ENCODE measurements at regions of chr6 and their contacts with region 1.

Region 1: GRCh38 chr6:98845211-98846020 is 11.0 kb downstream of the POU3F2 start:
- DNase-seq: peak in 8 of 9 experiments; percentile 43 to 74 (median 66)
- ATAC-seq: peak; percentile 79
- H3K4me3 ChIP-seq: peak overlapping the region in 1 of 2 experiments; percentile 3
- H3K4me3 Mint-ChIP-seq: peak overlapping the region; percentile 72
- H3K27ac ChIP-seq: no peak overlapping the region
- H3K27ac Mint-ChIP-seq: no peak overlapping the region
- H3K4me1 ChIP-seq: peaks cover 24% of the 10 kb centered on the region
- H3K4me1 Mint-ChIP-seq: peaks cover 27% of the 10 kb centered on the region
- H3K27me3 ChIP-seq: peaks cover 65% of the 10 kb centered on the region in 2 experiments
- H3K27me3 Mint-ChIP-seq: peaks cover 72% of the 10 kb centered on the region
- CTCF ChIP-seq: peak; percentile 79

Region 2: DNA sequence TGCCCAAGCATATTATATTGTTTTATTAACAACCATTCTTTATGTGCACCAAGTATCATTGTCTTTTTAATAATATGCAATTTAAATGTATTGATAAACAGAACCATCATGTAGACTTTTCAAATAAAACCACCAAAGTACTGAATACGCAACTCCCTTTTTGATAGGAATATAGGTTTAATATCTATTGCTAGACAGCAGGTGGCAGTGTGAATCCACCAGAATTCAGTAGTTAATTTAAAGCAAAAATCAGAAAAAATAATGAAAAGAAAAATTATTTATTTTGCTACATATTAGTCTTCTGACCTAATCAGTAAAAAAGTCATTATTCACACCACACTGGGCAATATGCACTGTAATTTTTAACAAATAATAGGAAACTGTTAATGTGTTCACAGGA is 1777.2 kb before region 1 on chr6:
- CTCF ChIA-PET with region 1: no interaction called
- POLR2A ChIA-PET with region 1: no interaction called
- intact Hi-C with region 1: loop called (anchors 5 to 10 kb)
- DNase-seq: peak in 2 of 9 experiments; percentile 15 to 24
- ATAC-seq: no peak
- H3K4me3 ChIP-seq: no peak overlapping the region
- H3K4me3 Mint-ChIP-seq: no peak overlapping the region
- H3K27ac ChIP-seq: no peak overlapping the region
- H3K27ac Mint-ChIP-seq: no peak overlapping the region
- H3K4me1 ChIP-seq: no peaks in the 10 kb centered on the region
- H3K4me1 Mint-ChIP-seq: no peaks in the 10 kb centered on the region
- H3K27me3 ChIP-seq: no peaks in the 10 kb centered on the region
- H3K27me3 Mint-ChIP-seq: no peaks in the 10 kb centered on the region
- CTCF ChIP-seq: peak; percentile 34

Region 3: DNA sequence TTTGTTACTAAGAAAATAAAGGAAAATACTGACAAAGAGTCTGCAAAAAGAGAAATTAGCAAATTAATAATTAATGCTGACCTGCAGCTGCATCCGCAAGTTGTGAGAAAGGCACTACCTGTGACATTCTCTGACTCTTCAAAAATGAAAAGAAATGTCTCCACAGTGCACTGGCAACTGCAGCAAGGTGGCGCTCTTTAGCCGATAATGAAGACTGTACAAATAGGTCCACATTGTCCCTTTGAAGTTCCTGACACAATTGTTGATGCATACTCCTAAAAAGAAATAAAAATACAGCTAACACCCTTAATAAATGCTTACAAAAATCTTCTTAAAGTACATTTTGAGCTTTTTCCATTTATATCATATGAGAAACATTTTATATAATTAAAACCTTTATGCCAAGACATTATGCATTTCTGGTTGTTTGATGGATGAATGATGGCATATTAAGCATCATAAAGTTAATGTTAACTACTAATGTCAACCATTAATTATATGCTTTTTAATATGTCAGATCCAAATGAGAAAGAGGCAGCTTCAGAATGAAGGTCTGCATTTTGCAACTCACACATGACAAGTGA is 1658.9 kb before region 1 on chr6:
- CTCF ChIA-PET with region 1: no interaction called
- POLR2A ChIA-PET with region 1: no interaction called
- intact Hi-C with region 1: loop called (anchors 2 to 5 kb)
- DNase-seq: peak; percentile 33 to 72 (median 60)
- ATAC-seq: peak; percentile 65
- H3K4me3 ChIP-seq: no peak overlapping the region
- H3K4me3 Mint-ChIP-seq: no peak overlapping the region
- H3K27ac ChIP-seq: no peak overlapping the region
- H3K27ac Mint-ChIP-seq: no peak overlapping the region
- H3K4me1 ChIP-seq: no peaks in the 10 kb centered on the region
- H3K4me1 Mint-ChIP-seq: no peaks in the 10 kb centered on the region
- H3K27me3 ChIP-seq: no peaks in the 10 kb centered on the region
- H3K27me3 Mint-ChIP-seq: no peaks in the 10 kb centered on the region
- CTCF ChIP-seq: peak; percentile 91

Region 4: DNA sequence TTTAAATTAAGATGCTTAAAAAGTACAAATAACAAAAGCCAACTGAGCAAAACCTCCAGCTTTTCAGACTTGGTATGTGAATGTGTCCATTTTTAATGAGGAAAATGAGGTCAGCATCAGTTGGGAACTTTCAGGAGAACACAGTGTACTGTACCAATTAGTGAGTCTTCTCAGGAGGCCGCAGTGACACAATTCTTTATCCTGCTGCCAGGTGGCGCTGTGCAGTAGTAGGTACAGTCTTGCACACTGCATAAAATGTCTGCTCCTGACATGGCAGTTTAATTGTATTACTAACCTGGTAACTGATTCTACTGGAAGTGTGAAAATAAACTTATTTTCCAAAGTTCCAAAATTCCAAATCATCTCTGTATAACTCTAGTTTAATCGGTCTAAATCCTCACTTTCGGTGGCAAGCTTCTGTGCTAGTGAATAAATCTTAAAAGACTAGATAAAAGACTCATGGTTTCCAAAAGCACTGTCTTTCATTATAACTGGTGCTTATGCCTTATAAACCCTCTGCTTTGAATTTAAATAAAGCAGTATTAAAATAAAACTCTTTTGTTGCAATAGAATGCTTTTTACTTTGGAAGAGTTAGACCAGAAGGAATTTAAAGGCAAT is 1347.6 kb before region 1 on chr6:
- CTCF ChIA-PET with region 1: interaction called, 28 read pairs
- POLR2A ChIA-PET with region 1: no interaction called
- intact Hi-C with region 1: loop called in 1 of 2 experiments (anchors 1 kb)
- DNase-seq: peak; percentile 6 to 69 (median 50)
- ATAC-seq: peak; percentile 75
- H3K4me3 ChIP-seq: no peak overlapping the region
- H3K4me3 Mint-ChIP-seq: no peak overlapping the region
- H3K27ac ChIP-seq: no peak overlapping the region
- H3K27ac Mint-ChIP-seq: no peak overlapping the region
- H3K4me1 ChIP-seq: no peaks in the 10 kb centered on the region
- H3K4me1 Mint-ChIP-seq: no peaks in the 10 kb centered on the region
- H3K27me3 ChIP-seq: no peaks in the 10 kb centered on the region
- H3K27me3 Mint-ChIP-seq: peaks cover 12% of the 10 kb centered on the region
- CTCF ChIP-seq: peak; percentile 84

Region 5: DNA sequence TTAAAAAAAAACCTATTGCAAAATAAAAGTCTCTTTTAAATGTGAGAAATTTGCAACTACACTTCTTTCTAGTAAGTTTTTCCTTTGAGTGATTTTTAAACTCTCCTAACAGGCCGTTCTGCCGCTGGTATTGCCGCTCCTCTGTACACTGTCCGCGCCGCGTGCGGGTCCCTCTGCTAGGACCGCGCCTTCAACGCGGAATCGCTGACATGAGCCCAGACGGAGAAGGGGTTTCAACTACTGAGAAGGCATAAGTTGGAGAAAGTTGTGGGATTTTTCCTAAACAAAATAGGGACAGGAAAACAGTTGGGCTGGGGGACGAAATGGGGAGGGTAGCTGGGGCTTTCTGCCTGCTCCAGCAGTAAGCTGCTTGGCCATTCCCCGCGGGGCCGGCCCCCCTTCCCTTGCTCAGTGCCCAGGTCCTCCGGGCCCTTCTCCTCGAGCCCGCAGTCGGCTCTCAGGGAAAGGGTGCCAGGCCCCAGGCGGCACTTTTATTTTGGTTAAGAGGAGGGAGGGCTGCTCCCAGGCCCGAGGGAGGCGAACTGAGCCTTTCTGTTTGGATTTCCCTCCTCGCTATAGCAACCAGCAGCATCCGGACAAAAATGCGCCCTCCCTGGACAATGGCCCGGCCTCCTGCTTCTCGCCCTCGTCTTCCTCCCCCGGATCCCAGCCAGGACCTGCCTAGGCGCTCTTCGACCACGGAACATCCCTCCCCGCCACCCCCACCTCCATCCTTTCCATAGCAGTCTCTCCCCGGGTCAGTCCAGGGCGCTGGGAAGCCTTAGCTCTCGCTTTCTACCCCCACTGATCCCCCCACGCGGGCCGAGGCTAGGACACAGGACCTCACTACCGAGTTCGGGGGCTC is 17.9 kb before region 1 on chr6:
- CTCF ChIA-PET with region 1: no interaction called
- POLR2A ChIA-PET with region 1: interaction called, 3 read pairs
- intact Hi-C with region 1: loop called in 1 of 2 experiments (anchors 2 kb)
- DNase-seq: no peak
- ATAC-seq: no peak
- H3K4me3 ChIP-seq: no peak overlapping the region
- H3K4me3 Mint-ChIP-seq: no peak overlapping the region
- H3K27ac ChIP-seq: no peak overlapping the region
- H3K27ac Mint-ChIP-seq: no peak overlapping the region
- H3K4me1 ChIP-seq: peaks cover 35% of the 10 kb centered on the region
- H3K4me1 Mint-ChIP-seq: peaks cover 39% of the 10 kb centered on the region
- H3K27me3 ChIP-seq: peaks cover 47 to 54% of the 10 kb centered on the region in 2 experiments
- H3K27me3 Mint-ChIP-seq: peaks cover 76% of the 10 kb centered on the region
- CTCF ChIP-seq: no peak